Heart left ventricle (tissue), 16 donors: ENCODE measurements at regions of chr15 and their contacts with region 1.

Region 1: GRCh38 chr15:31870328-31871165 is 159.8 kb upstream of the CHRNA7 start:
- DNase-seq: peak; percentile 62 to 94 (median 90)
- ATAC-seq: peak; percentile 91 to 98 (median 98)
- H3K4me3 ChIP-seq: peak within 1 kb of the TSS; percentile 37 to 93 (median 71)
- H3K27ac ChIP-seq: peak within 1 kb of the TSS in 11 of 12 donors; percentile 61 to 88 (median 73)
- H3K4me1 ChIP-seq: peaks cover 0 to 17% (median 8%) of the 10 kb centered on the region in 12 donors
- H3K27me3 ChIP-seq: peaks cover 0 to 5% (median 0%) of the 10 kb centered on the region in 9 donors
- CTCF ChIP-seq: peak in 2 of 12 donors; percentile 9 to 17
- POLR2A ChIP-seq: no peak

Region 2: DNA sequence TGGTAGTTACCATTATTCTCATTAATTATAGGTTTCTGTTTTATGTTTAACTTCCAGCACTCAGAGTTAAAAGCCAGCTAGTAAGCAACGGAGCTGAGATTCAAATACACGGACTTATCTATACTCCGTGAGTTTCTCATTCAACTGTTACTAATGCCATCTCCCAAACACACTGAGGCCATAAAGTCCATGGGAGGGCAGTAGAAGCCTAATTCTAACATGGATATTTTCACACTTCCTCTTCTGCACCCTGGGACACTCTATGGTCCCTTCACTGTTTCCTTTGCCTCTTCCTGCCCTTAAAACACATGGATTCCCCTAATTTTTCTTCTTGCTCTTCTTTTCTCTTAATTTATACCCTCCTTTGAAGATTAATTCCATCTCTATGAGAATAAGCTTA is 298.9 kb before region 1 on chr15:
- intact Hi-C with region 1: loop called in 2 of 10 experiments (anchors 5 to 10 kb)
- DNase-seq: no peak
- ATAC-seq: peak in 2 of 4 donors; percentile 52 to 60
- H3K4me3 ChIP-seq: no peak overlapping the region
- H3K27ac ChIP-seq: no peak overlapping the region
- H3K4me1 ChIP-seq: peaks cover 0 to 9% (median 0%) of the 10 kb centered on the region in 12 donors
- H3K27me3 ChIP-seq: no peaks in the 10 kb centered on the region
- CTCF ChIP-seq: peak in 6 of 12 donors; percentile 8 to 49 (median 22)
- POLR2A ChIP-seq: no peak

Region 3: DNA sequence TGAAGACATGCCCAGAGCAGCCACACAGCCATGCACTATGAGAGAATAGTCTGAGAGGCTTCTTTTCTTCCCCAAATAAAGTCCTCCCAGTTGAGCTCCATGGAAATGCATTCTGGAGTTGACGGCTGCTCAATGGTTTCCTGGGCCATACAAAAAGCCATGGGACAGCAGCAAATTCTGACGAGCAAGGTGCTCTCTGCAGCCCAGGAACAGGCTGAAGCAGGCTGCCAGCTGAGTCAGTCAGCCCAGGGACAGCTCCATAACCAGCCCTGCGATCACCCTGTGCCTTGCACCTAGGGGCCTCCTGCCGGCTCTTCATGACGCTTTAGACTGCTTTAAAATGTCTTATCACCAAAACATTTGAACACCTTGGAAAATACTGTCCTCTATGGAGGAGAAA is 96.5 kb before region 1 on chr15:
- intact Hi-C with region 1: no loop called
- DNase-seq: no peak
- ATAC-seq: peak in 2 of 4 donors; percentile 48 to 62
- H3K4me3 ChIP-seq: no peak overlapping the region
- H3K27ac ChIP-seq: no peak overlapping the region
- H3K4me1 ChIP-seq: no peaks in the 10 kb centered on the region
- H3K27me3 ChIP-seq: no peaks in the 10 kb centered on the region
- CTCF ChIP-seq: no peak
- POLR2A ChIP-seq: no peak

Region 4: GRCh38 chr15:31799715-31800321 is 70.7 kb before region 1 on chr15:
- intact Hi-C with region 1: loop called in 1 of 10 experiments (anchors 10 kb)
- DNase-seq: peak in 1 of 5 donors; percentile 53
- ATAC-seq: peak; percentile 62 to 89 (median 80)
- H3K4me3 ChIP-seq: no peak overlapping the region
- H3K27ac ChIP-seq: peak overlapping the region in 4 of 12 donors; percentile 28 to 62 (median 44)
- H3K4me1 ChIP-seq: peaks cover 0 to 14% (median 4%) of the 10 kb centered on the region in 12 donors
- H3K27me3 ChIP-seq: no peaks in the 10 kb centered on the region
- CTCF ChIP-seq: no peak
- POLR2A ChIP-seq: no peak

Region 5: GRCh38 chr15:31905054-31905453 is 34.5 kb after region 1 on chr15:
- intact Hi-C with region 1: no loop called
- DNase-seq: no peak
- ATAC-seq: peak in 3 of 4 donors; percentile 51 to 84 (median 80)
- H3K4me3 ChIP-seq: no peak overlapping the region
- H3K27ac ChIP-seq: no peak overlapping the region
- H3K4me1 ChIP-seq: peaks cover 0 to 10% (median 0%) of the 10 kb centered on the region in 12 donors
- H3K27me3 ChIP-seq: no peaks in the 10 kb centered on the region
- CTCF ChIP-seq: no peak
- POLR2A ChIP-seq: no peak

Region 6: DNA sequence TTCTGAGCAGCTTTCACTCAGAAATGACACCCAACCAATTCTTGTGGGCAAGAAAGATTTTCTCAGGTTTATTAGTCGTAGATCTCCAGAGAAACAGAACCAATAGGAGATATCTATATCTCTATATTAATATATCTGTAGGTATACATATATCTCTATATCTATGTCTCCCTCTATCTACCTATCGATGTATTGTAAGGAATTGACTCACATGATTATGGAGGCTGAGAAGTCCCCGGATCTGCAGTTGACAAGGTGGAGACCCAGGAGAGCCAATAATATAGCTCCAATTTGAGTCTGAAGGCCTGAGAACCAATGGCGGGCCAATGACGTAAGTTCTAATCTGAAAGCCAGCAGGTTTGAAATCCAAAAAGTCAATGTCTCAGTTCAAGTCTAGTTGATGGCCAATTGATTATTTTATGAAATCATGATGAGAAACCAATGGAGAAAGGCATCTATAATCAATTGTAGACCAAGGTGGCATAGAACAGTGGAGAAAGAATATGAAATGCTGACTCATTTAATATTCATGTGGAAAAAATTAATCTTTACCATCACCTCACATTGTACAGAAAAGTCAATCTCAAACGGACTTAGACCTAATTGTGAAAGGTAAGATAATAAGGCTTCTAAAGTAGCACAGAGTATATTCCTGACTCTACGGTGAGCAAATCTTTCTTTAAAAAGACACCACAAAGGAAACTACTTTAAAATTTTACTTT is 94.2 kb after region 1 on chr15:
- intact Hi-C with region 1: loop called in 1 of 10 experiments (anchors 10 kb)
- DNase-seq: no peak
- ATAC-seq: no peak
- H3K4me3 ChIP-seq: no peak overlapping the region
- H3K27ac ChIP-seq: no peak overlapping the region
- H3K4me1 ChIP-seq: no peaks in the 10 kb centered on the region
- H3K27me3 ChIP-seq: peaks cover 0 to 36% (median 13%) of the 10 kb centered on the region in 9 donors
- CTCF ChIP-seq: no peak
- POLR2A ChIP-seq: no peak